ENCODE measurements at regions of chr4 and their contacts with region 1.

Region 1: DNA sequence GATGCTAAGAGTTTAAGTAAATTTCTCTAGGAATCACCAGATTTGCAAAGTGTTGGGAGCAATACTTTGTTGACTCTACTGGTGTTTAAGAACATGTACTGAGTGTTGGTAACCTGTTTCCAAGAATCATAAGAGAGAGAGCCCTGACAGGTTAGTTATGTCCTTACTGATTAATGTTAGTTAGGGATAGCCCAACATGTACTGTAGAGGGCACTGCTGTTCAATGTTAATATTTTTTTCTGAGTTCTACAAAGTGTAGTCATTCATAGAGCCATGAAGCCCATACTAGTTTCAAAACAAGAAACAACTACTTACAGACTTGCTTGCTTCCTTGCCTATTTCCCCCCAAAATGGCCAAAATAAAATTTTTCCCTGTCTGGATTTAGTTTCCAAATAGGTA is 11.9 kb downstream of the TMPRSS11D start:
- DNase-seq: peak; percentile 58
- H3K4me3 ChIP-seq: no peak overlapping the region
- H3K27ac ChIP-seq: no peak overlapping the region
- H3K4me1 ChIP-seq: peaks cover 9% of the 10 kb centered on the region
- H3K27me3 ChIP-seq: no peaks in the 10 kb centered on the region
- CTCF ChIP-seq: peak; percentile 62 to 64

Region 2: DNA sequence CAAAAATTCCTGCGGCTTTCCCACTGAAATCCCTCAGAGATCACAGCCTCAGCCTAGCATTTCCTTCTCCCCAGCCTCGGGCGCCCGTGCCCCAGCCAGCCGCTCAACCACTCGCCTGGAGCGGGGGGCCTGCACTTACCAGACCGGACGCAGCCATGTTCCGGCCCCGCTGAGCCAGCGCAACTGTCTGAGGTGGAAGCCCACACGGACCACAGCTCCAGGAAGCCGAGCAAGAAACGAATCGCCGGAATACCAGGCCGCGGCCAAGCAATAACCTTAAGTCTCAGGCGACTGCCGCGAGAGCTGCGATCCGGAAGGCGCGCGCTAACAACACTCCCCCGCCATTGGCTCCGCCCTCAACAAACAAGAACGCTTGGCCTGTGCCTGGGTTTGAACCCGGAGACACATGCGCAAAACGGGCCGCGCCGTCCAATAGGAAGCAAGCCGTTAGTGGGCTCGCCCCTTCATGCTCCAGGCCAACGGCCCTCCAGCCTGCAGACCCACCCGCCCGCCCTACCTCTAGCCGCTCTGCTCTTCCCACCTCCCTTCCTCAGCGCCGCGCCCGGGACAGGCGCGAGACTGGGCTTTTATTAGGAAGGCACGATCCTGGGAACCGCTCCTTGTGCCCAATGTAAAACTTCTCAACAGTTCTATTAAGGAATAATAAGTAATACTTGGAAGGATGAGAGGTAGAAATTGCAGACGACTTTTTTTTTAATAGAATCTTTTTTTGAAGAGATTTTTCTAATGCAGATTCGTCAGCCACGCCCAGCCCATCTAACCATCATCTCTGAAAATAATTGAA is 326.5 kb before region 1 on chr4 and contains the start of gene CENPC:
- CTCF ChIA-PET with region 1: no interaction called
- dilution Hi-C with region 1: no loop called
- in situ Hi-C with region 1: no loop called
- intact Hi-C with region 1: loop called (anchors 5 kb)
- DNase-seq: peak; percentile 96
- H3K4me3 ChIP-seq: peak within 1 kb of the TSS; percentile 64 to 91 (median 88)
- H3K27ac ChIP-seq: peak within 1 kb of the TSS; percentile 92
- H3K4me1 ChIP-seq: peaks cover 7% of the 10 kb centered on the region
- H3K27me3 ChIP-seq: no peaks in the 10 kb centered on the region
- CTCF ChIP-seq: no peak
- total RNA-seq, gene CENPC: 12.3 to 13.0 TPM

Region 3: DNA sequence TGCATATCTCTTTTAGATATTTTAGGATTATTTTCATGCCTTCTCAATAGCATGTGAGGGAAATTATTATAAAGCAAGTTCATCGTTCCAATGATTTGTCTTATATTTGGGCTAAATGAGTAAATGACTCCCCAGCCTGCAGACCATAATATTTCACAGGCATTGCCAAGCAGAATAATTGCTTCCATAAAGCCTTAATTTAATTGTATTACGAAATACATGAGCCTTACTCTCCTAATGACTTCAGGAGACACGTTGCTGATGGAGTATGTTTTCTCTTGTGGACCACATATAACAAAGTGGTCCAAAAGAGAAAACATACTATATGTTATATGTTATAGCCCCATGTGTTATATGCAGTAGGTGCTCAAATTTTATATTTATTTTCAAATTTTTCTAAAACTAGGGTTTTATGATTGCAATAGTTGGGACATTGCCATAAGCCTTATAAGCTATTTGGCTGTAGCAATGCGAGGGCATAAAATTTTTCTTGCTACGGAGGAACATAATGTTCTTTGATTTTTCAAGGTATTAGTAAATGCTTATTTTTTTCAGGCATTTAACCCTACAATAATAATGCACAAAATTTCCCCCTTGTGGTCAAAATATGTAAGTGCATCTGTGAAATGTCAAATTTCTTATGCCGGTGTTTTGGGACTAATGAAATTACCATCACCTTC is 38.2 kb after region 1 on chr4:
- CTCF ChIA-PET with region 1: no interaction called
- dilution Hi-C with region 1: no loop called
- in situ Hi-C with region 1: no loop called
- intact Hi-C with region 1: loop called (anchors 1 kb)
- DNase-seq: peak; percentile 17
- H3K4me3 ChIP-seq: no peak overlapping the region
- H3K27ac ChIP-seq: no peak overlapping the region
- H3K4me1 ChIP-seq: no peaks in the 10 kb centered on the region
- H3K27me3 ChIP-seq: no peaks in the 10 kb centered on the region
- CTCF ChIP-seq: peak; percentile 54 to 71

Region 4: GRCh38 chr4:67988991-67989390 is 117.1 kb after region 1 on chr4:
- CTCF ChIA-PET with region 1: no interaction called
- dilution Hi-C with region 1: no loop called
- in situ Hi-C with region 1: no loop called
- intact Hi-C with region 1: loop called (anchors 5 kb)
- DNase-seq: peak; percentile 20
- H3K4me3 ChIP-seq: no peak overlapping the region
- H3K27ac ChIP-seq: no peak overlapping the region
- H3K4me1 ChIP-seq: no peaks in the 10 kb centered on the region
- H3K27me3 ChIP-seq: no peaks in the 10 kb centered on the region
- CTCF ChIP-seq: no peak

Region 5: GRCh38 chr4:68175562-68176155 is 303.8 kb after region 1 on chr4:
- CTCF ChIA-PET with region 1: no interaction called
- dilution Hi-C with region 1: no loop called
- in situ Hi-C with region 1: no loop called
- intact Hi-C with region 1: loop called (anchors 1 kb)
- DNase-seq: peak; percentile 53
- H3K4me3 ChIP-seq: no peak overlapping the region
- H3K27ac ChIP-seq: no peak overlapping the region
- H3K4me1 ChIP-seq: peaks cover under 1% of the 10 kb centered on the region
- H3K27me3 ChIP-seq: no peaks in the 10 kb centered on the region
- CTCF ChIP-seq: peak; percentile 50 to 72

Measured in mammary epithelial cell (primary cell).